ENCODE measurements at regions of chr6 and their contacts with region 1.

Region 1: GRCh38 chr6:56637640-56638039 is 5.0 kb downstream of the DST start:
- DNase-seq: peak; percentile 75
- H3K4me3 ChIP-seq: no peak overlapping the region
- H3K27ac ChIP-seq: no peak overlapping the region
- H3K4me1 ChIP-seq: peaks cover 2% of the 10 kb centered on the region
- H3K27me3 ChIP-seq: no peaks in the 10 kb centered on the region
- CTCF ChIP-seq: peak; percentile 71

Region 2: GRCh38 chr6:56699066-56699654 is 61.5 kb after region 1 on chr6:
- CTCF ChIA-PET with region 1: interaction called, 6 read pairs
- POLR2A ChIA-PET with region 1: no interaction called
- intact Hi-C with region 1: loop called (anchors 1 kb)
- DNase-seq: peak; percentile 60
- H3K4me3 ChIP-seq: no peak overlapping the region
- H3K27ac ChIP-seq: no peak overlapping the region
- H3K4me1 ChIP-seq: no peaks in the 10 kb centered on the region
- H3K27me3 ChIP-seq: no peaks in the 10 kb centered on the region
- CTCF ChIP-seq: peak; percentile 74

Region 3: GRCh38 chr6:56757588-56757984 is 119.9 kb after region 1 on chr6:
- CTCF ChIA-PET with region 1: no interaction called
- POLR2A ChIA-PET with region 1: no interaction called
- intact Hi-C with region 1: loop called (anchors 5 kb)
- DNase-seq: peak; percentile 64
- H3K4me3 ChIP-seq: no peak overlapping the region
- H3K27ac ChIP-seq: no peak overlapping the region
- H3K4me1 ChIP-seq: peaks cover 34% of the 10 kb centered on the region
- H3K27me3 ChIP-seq: no peaks in the 10 kb centered on the region
- CTCF ChIP-seq: peak; percentile 65

Measured in A673 (cell line).